Cardiac septum (tissue), 1 donor: ENCODE measurements at regions of chr10 and their contacts with region 1.

Region 1: GRCh38 chr10:18312374-18313139 is 172.3 kb downstream of the CACNB2 start:
- DNase-seq: no peak

Region 2: GRCh38 chr10:17847585-17848296 is 464.8 kb before region 1 on chr10:
- intact Hi-C with region 1: loop called (anchors 5 kb)
- DNase-seq: no peak

Region 3: DNA sequence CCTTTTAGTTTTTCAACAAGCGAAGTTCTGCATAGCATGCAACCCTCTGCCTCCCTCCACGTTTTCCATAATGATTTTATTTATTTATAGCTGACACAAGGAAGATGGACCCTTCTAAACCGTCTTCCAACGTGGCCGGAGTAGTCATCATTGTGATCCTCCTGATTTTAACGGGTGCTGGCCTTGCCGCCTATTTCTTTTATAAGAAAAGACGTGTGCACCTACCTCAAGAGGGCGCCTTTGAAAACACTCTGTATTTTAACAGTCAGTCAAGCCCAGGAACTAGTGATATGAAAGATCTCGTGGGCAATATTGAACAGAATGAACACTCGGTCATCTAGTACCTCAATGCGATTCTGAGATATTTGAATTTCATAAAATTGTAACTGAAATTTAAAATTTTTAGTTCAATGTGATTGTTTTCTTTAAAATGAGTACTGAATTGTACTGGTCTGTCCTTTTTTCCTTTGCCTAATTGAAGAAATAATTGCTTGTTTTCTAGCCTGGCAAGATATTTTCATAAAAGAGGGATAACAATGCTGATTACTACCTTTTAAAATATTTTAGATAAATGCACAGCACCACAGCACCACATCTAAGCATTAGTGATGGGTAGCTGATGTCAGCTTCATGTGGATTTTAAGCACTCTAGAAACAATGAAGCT is 402.3 kb before region 1 on chr10:
- intact Hi-C with region 1: loop called (anchors 5 kb)
- DNase-seq: no peak

Region 4: GRCh38 chr10:17989908-17990767 is 322.4 kb before region 1 on chr10:
- intact Hi-C with region 1: no loop called
- DNase-seq: no peak

Region 5: DNA sequence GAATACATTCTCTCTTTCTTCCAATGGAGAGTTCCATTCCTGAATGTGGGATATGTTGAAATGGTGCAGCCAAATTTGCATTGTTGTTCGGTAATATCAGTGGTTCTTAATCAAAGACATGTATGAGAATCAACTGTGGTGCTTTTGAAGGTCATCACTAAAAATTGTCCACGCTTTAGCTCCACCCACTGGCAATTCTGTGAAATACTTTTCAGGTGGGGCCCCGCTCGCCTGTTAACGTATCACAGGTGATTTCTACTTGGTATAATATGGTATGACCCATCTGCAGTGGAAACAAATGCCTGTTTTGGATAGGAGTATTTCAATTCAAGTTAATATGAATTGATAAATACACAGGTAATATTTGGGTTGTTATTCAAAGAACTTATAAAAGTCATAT is 160.4 kb after region 1 on chr10:
- intact Hi-C with region 1: loop called (anchors 5 kb)
- DNase-seq: no peak

Region 6: GRCh38 chr10:18486438-18486837 is 173.9 kb after region 1 on chr10:
- intact Hi-C with region 1: no loop called
- DNase-seq: no peak